GM18951 (cell line): ENCODE measurements at regions of chr12 and their contacts with region 1.

Region 1: GRCh38 chr12:49707128-49707811 is at the start of gene FMNL3:
- POLR2A ChIP-seq: peak; percentile 65

Region 2: GRCh38 chr12:49651855-49652254 is 55.4 kb before region 1 on chr12:
- in situ Hi-C with region 1: loop called (anchors 5 kb)
- POLR2A ChIP-seq: no peak

Region 3: GRCh38 chr12:49942921-49943624 is 235.8 kb after region 1 on chr12:
- in situ Hi-C with region 1: no loop called
- POLR2A ChIP-seq: no peak